Gastrocnemius medialis (tissue), 4 donors: ENCODE measurements at regions of chr20 and their contacts with region 1.

Region 1: GRCh38 chr20:20083807-20084206 is 31.5 kb downstream of the CFAP61 start:
- DNase-seq: no peak
- ATAC-seq: peak; percentile 16 to 24
- H3K4me3 ChIP-seq: peak overlapping the region; percentile 18 to 71 (median 24)
- H3K27ac ChIP-seq: peak overlapping the region; percentile 96 to 99 (median 98)
- H3K4me1 ChIP-seq: peaks cover 17 to 24% of the 10 kb centered on the region in 2 donors
- H3K27me3 ChIP-seq: no peaks in the 10 kb centered on the region
- CTCF ChIP-seq: peak; percentile 43 to 62 (median 57)
- POLR2A ChIP-seq: no peak

Region 2: GRCh38 chr20:20138301-20139064 is 54.7 kb after region 1 on chr20:
- in situ Hi-C with region 1: no loop called
- intact Hi-C with region 1: loop called (anchors 1 kb)
- DNase-seq: peak; percentile 38 to 80
- ATAC-seq: peak; percentile 83 to 88
- H3K4me3 ChIP-seq: peak overlapping the region in 3 of 4 donors; percentile 14 to 19 (median 15)
- H3K27ac ChIP-seq: peak overlapping the region; percentile 92 to 97 (median 96)
- H3K4me1 ChIP-seq: peaks cover 32 to 43% of the 10 kb centered on the region in 2 donors
- H3K27me3 ChIP-seq: no peaks in the 10 kb centered on the region
- CTCF ChIP-seq: peak in 1 of 5 experiments; percentile 12
- POLR2A ChIP-seq: peak in 1 of 2 donors; percentile 4

Region 3: DNA sequence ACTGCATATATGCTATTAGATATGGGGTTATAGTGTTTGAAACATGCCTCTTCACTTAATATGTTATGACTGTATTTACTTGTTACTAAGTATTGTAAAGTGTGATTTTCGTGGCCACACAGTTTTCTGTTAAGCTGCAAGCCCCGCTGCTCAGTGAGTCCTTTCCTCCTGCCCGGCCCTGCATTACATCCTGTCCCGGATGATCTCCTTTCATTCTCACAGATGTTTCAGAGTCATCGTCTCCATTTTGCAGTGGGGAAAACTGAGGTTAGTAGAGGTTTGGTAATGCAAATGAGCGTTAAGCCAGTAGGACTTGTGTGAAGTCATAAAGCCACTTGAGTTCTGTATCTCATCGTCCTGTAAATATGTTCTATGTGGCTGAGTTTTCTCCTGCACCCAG is 124.1 kb after region 1 on chr20:
- in situ Hi-C with region 1: loop called in 1 of 4 experiments (anchors 10 kb)
- intact Hi-C with region 1: no loop called
- DNase-seq: no peak
- ATAC-seq: no peak
- H3K4me3 ChIP-seq: no peak overlapping the region
- H3K27ac ChIP-seq: no peak overlapping the region
- H3K4me1 ChIP-seq: peaks cover 45 to 51% of the 10 kb centered on the region in 2 donors
- H3K27me3 ChIP-seq: no peaks in the 10 kb centered on the region
- CTCF ChIP-seq: no peak
- POLR2A ChIP-seq: no peak

Region 4: DNA sequence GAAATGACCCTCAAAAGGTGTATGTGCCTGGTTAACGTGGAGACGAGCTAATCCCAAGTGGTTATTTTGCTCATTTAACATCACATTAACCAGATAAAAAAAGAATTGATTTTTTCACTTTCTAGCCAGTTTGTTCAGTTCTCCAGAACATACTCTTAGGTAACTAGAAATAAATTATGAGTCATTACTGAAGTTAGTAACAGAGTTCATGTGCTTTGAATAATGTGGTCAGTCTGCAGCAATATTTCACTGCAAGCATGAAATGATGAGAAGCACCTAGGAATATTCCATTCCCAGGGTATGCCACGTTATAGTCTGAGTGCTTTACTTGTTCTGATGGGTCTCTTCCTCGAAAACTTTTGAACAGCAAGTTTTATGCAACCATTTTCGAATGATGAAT is 145.8 kb after region 1 on chr20:
- in situ Hi-C with region 1: loop called (anchors 5 to 25 kb)
- intact Hi-C with region 1: loop called (anchors 2 kb)
- DNase-seq: no peak
- ATAC-seq: peak; percentile 71 to 82
- H3K4me3 ChIP-seq: no peak overlapping the region
- H3K27ac ChIP-seq: peak overlapping the region; percentile 85 to 90 (median 86)
- H3K4me1 ChIP-seq: peaks cover 56 to 59% of the 10 kb centered on the region in 2 donors
- H3K27me3 ChIP-seq: no peaks in the 10 kb centered on the region
- CTCF ChIP-seq: no peak
- POLR2A ChIP-seq: peak; percentile 44 to 76

Region 5: DNA sequence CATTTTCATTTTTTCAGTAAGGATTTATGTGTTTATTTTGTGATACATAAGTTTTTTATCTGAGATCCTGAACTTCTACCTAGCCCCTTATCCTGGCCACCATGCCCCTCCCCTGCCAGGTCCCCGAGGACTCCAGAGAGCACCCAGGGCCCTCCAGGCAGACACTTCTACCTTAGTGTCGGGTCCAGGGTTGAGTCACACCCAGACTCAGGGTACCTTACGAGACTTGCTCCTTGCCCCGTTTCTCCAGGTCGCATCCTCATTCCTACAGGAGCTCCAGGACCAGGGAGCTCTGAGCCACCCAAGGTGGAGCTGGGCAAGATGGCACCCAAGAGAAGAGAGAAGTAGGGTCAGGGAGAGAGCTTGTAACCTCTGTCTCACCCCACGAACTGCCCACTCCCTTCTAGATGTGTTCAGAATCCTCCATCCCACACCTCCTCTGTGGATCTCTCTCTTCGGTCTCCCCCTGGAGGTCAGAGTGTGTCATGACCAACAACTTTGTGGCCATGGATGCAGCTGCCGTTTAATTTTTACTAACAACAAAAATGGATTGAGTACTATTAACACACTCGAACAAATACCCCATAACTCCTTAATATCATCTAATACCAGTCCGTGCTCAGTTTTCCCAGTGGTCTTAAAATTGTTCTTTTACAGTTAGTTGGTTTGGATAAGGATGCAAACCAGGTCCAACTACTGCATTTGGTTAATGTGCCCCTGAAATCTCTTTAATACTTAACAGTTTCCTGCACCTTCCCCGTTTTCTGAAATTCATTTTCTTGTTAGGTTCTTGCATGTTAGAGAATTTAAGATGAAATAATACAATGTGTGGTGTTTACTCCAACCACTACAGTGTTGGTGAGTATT is 153.5 kb after region 1 on chr20:
- in situ Hi-C with region 1: loop called in 3 of 4 experiments (anchors 5 to 25 kb)
- intact Hi-C with region 1: loop called (anchors 1 kb)
- DNase-seq: peak in 1 of 2 donors; percentile 49
- ATAC-seq: peak; percentile 51 to 73
- H3K4me3 ChIP-seq: no peak overlapping the region
- H3K27ac ChIP-seq: peak overlapping the region in 2 of 4 donors; percentile 8 to 31
- H3K4me1 ChIP-seq: peaks cover 10 to 11% of the 10 kb centered on the region in 2 donors
- H3K27me3 ChIP-seq: no peaks in the 10 kb centered on the region
- CTCF ChIP-seq: peak; percentile 75 to 84 (median 79)
- POLR2A ChIP-seq: no peak

Region 6: GRCh38 chr20:20593447-20594170 is 509.8 kb after region 1 on chr20:
- in situ Hi-C with region 1: loop called in 1 of 4 experiments (anchors 25 kb)
- intact Hi-C with region 1: no loop called
- DNase-seq: no peak
- ATAC-seq: peak in 1 of 2 donors; percentile 55
- H3K4me3 ChIP-seq: no peak overlapping the region
- H3K27ac ChIP-seq: peak overlapping the region in 1 of 4 donors; percentile 11
- H3K4me1 ChIP-seq: no peaks in the 10 kb centered on the region
- H3K27me3 ChIP-seq: no peaks in the 10 kb centered on the region
- CTCF ChIP-seq: peak in 2 of 5 experiments; percentile 29 to 36
- POLR2A ChIP-seq: no peak